WTC11 (cell line): ENCODE measurements at regions of chr14 and their contacts with region 1.

Region 1: GRCh38 chr14:81170104-81170828 is 50.5 kb downstream of the GTF2A1 start:
- DNase-seq: peak; percentile 83
- ATAC-seq: peak; percentile 93
- H3K4me3 Mint-ChIP-seq: peak overlapping the region; percentile 88
- H3K27ac Mint-ChIP-seq: peak overlapping the region; percentile 85
- H3K4me1 Mint-ChIP-seq: peaks cover 6% of the 10 kb centered on the region
- H3K27me3 Mint-ChIP-seq: no peaks in the 10 kb centered on the region; the same call in 1 of the 2 replicates
- CTCF ChIP-seq: peak; percentile 81

Region 2: DNA sequence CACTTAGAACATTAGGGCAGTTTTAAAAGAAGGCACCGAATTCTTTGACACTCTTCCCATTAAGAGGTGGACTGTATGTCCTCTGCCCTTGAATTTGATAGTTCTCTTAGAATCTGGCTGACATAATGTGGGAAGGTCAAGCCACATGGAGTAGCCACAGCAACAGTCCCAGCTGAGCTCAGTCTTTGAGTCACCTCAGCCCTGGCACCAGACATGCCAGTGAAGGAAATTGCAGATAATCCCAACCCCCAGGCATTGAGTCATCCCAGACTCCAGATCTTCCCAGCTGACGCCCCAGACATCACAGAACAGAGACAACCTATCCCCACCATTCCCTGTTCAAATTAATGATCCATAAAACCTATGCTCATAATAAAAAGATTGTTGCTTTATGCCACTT is 33.0 kb before region 1 on chr14:
- CTCF ChIA-PET with region 1: no interaction called
- POLR2A ChIA-PET with region 1: no interaction called
- DNase-seq: no peak
- ATAC-seq: no peak
- H3K4me3 Mint-ChIP-seq: no peak overlapping the region
- H3K27ac Mint-ChIP-seq: no peak overlapping the region
- H3K4me1 Mint-ChIP-seq: no peaks in the 10 kb centered on the region
- H3K27me3 Mint-ChIP-seq: no peaks in the 10 kb centered on the region
- CTCF ChIP-seq: no peak

Region 3: GRCh38 chr14:81220830-81221578 is 50.7 kb after region 1 on chr14 and contains the start of gene GTF2A1:
- CTCF ChIA-PET with region 1: interaction called, 5 read pairs
- POLR2A ChIA-PET with region 1: interaction called, 12 read pairs
- DNase-seq: peak; percentile 90
- ATAC-seq: peak; percentile 81
- H3K4me3 Mint-ChIP-seq: peak within 1 kb of the TSS; percentile 96
- H3K27ac Mint-ChIP-seq: peak within 1 kb of the TSS; percentile 99
- H3K4me1 Mint-ChIP-seq: peaks cover 31% of the 10 kb centered on the region
- H3K27me3 Mint-ChIP-seq: peaks cover 4% of the 10 kb centered on the region; the same call in 1 of the 2 replicates
- CTCF ChIP-seq: no peak
- total RNA-seq, gene GTF2A1: 44.3 to 49.0 TPM (median 45.2 TPM) in 3 replicates